ENCODE measurements at regions of chr11 and their contacts with region 1.

Region 1: DNA sequence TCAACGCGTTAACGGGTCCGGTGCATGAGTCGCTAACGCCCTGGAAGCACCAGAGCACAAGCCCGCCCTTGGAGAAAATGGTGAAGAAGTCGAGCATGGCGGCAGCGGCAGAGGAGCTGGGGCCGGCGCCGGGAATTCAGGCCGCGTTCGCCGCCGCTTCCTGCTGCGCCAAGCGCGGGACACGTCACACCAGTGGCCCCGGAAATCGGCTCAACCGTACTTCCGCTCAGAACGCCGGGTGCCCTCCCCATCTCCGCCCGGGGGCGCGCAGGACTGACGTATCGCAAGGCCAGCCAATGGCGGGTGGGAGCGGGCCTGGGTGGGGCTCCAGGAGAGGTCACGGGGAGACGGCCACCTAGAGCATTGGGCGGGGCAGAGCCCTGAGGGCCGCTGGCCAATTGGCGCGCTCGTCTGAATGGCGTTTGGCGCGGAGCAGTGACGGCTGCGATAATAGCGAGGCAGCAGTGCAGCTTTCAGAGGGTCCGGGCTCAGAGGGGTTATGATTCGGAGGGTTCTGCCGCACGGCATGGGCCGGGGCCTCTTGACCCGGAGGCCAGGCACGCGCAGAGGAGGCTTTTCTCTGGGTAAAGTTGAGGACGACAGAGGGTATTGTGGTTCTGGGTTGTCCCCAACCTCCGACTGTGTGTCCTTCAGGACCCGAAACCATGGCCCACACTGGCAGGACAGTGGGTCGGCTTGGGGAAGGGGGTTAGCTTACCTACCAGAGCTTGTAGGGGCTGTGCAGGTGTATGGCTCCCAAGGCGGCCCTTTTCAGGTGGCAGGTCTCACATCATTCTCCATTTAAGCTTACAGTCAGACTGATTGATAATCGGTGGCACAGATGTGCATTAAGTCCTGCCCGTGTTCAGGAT is at the starts of genes FOXRED1 and SRPRA:
- DNase-seq: peak; percentile 93
- ATAC-seq: peak; percentile 99
- H3K4me3 ChIP-seq: peak within 1 kb of the TSS; percentile 96
- H3K27ac ChIP-seq: peak within 1 kb of the TSS; percentile 85
- H3K4me1 ChIP-seq: peaks cover 3% of the 10 kb centered on the region; the same call in 1 of the 2 replicates
- H3K27me3 ChIP-seq: no peaks in the 10 kb centered on the region
- CTCF ChIP-seq: no peak
- EP300 ChIP-seq: peak in 1 of 2 experiments; percentile 22; a peak in 1 of 4 replicates
- POLR2A ChIP-seq: peak; percentile 94
- RAD21 ChIP-seq: no peak
- polyA plus RNA-seq, gene FOXRED1: 9.9 to 10.5 TPM
- polyA plus RNA-seq, gene SRPRA: 29.6 to 50.4 TPM

Region 2: GRCh38 chr11:126211235-126212088 is 57.5 kb before region 1 on chr11 and contains the starts of genes FAM118B and RPUSD4:
- CTCF ChIA-PET with region 1: interaction called, 3 read pairs
- POLR2A ChIA-PET with region 1: no interaction called
- RAD21 ChIA-PET with region 1: no interaction called
- SMC1A ChIA-PET with region 1: interaction called, 3 read pairs
- in situ Hi-C with region 1: no loop called
- intact Hi-C with region 1: loop called (anchors 5 kb)
- DNase-seq: peak; percentile 87
- ATAC-seq: peak; percentile 97
- H3K4me3 ChIP-seq: peak within 1 kb of the TSS; percentile 99
- H3K27ac ChIP-seq: peak within 1 kb of the TSS; percentile 74
- H3K4me1 ChIP-seq: peaks cover 3% of the 10 kb centered on the region
- H3K27me3 ChIP-seq: no peaks in the 10 kb centered on the region
- CTCF ChIP-seq: no peak
- EP300 ChIP-seq: no peak
- POLR2A ChIP-seq: peak; percentile 93
- RAD21 ChIP-seq: no peak
- polyA plus RNA-seq, gene FAM118B: 21.3 to 24.7 TPM
- polyA plus RNA-seq, gene RPUSD4: 24.5 to 25.9 TPM

Region 3: DNA sequence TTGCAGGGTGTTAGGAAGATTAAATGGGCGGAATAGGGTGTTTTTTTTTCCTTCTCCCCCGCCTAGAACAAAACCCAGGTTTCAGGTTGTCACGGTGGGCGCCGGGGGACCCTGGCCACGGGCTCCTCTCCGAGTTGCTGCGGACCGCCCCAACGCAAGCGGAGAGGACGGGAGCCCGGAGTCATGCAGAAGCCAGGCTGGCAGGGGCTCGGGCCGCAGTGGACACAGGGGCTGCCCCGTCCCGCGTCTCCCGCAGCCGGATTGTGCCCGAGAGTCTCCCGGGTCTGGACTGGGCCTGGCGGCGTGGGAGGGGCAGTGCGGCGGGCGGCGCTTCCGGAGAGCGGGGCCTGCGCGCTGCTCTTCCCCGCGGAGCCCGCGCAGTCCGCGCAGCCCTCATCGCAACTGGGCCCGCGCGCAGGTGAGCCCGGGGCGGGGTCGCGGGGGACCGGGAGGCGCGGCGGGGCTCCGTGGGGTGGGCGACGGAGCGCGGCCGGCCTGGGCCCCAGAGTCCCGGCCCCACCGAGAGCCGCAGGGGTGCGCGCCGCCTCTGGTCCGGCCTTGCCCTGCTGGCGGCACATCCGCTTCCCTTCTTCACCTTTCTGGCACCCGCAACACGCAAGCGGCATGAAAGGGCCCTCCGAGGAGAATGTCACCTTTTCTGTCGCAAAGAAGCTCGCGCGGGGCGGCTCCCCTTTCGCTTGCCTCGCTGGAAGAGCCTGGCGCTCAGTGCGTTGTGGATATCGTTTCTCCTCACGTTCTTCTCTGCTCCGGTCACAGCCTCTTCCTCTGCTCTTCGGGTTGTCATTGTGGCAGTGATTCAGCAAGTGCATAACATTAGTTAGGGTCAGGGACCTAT is 14.0 kb after region 1 on chr11 and contains the start of gene TIRAP:
- CTCF ChIA-PET with region 1: no interaction called
- POLR2A ChIA-PET with region 1: interaction called, 10 read pairs
- RAD21 ChIA-PET with region 1: no interaction called
- SMC1A ChIA-PET with region 1: interaction called, 6 read pairs
- in situ Hi-C with region 1: no loop called
- intact Hi-C with region 1: no loop called
- DNase-seq: no peak
- ATAC-seq: peak; percentile 83
- H3K4me3 ChIP-seq: peak within 1 kb of the TSS; percentile 96
- H3K27ac ChIP-seq: peak within 1 kb of the TSS; percentile 84
- H3K4me1 ChIP-seq: peaks cover 22% of the 10 kb centered on the region
- H3K27me3 ChIP-seq: no peaks in the 10 kb centered on the region
- CTCF ChIP-seq: no peak
- EP300 ChIP-seq: no peak
- POLR2A ChIP-seq: peak; percentile 81
- RAD21 ChIP-seq: no peak
- polyA plus RNA-seq, gene TIRAP: 0.76 to 0.88 TPM

Region 4: GRCh38 chr11:126303623-126304456 is 34.9 kb after region 1 on chr11 and contains the start of gene DCPS:
- CTCF ChIA-PET with region 1: no interaction called
- POLR2A ChIA-PET with region 1: interaction called, 6 read pairs
- RAD21 ChIA-PET with region 1: no interaction called
- SMC1A ChIA-PET with region 1: interaction called, 8 read pairs
- in situ Hi-C with region 1: no loop called
- intact Hi-C with region 1: loop called (anchors 2 kb)
- DNase-seq: peak; percentile 81
- ATAC-seq: peak; percentile 94
- H3K4me3 ChIP-seq: peak within 1 kb of the TSS; percentile 96
- H3K27ac ChIP-seq: peak within 1 kb of the TSS; percentile 92
- H3K4me1 ChIP-seq: peaks cover 11% of the 10 kb centered on the region
- H3K27me3 ChIP-seq: no peaks in the 10 kb centered on the region
- CTCF ChIP-seq: no peak
- EP300 ChIP-seq: no peak
- POLR2A ChIP-seq: peak; percentile 99
- RAD21 ChIP-seq: no peak
- polyA plus RNA-seq, gene DCPS: 23.5 to 33.2 TPM